Lower leg skin (tissue), 4 donors: ENCODE measurements at regions of chr1 and their contacts with region 1.

Region 1: DNA sequence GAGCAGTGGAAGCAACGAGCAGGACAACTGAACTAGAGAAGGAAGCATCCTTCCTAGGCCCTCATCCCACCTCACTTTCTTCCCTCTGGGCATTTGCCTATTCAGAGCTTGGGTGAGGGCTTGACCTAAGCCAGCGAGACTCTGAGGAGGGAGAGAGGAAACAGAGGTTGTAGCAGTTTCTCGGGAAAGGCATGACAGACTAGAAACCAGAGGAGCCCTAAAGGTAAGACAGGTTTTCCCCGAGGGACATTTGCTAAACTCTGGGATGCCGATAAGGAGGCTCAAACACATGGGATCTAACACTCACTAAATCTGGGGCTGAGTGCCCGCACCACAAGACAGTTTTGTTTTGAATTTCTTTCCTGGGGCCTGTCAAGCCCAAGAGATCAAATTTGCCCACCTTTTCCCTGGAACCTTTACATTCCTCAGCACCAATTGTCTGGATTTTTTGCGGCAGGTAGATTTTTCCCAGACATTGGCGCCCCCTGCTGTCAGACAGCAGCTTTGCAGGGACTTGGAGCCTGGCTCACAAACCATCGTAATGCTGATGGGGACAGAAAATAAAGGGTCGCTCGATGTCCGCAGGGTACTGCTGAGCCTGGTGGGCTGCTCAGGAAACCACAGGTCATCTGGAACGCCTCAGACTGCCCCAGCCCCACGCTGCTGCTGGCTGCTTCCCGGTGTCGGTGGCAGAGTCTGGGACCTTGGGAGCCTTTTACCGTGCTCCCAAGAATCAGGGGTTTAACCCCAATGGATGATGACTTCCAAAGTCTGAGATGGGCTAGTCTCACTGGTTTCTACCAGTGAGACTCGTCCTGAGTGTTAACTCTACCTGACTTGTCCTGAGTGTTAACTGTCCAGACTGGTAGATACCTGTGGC is 23.4 kb upstream of the TSPAN2 start:
- DNase-seq: no peak
- H3K4me3 ChIP-seq: no peak overlapping the region
- CTCF ChIP-seq: peak in 1 of 3 donors; percentile 63
- POLR2A ChIP-seq: no peak

Region 2: GRCh38 chr1:114979278-114979891 is 133.4 kb before region 1 on chr1:
- intact Hi-C with region 1: loop called (anchors 10 kb)
- DNase-seq: peak; percentile 66 to 87
- H3K4me3 ChIP-seq: no peak overlapping the region
- CTCF ChIP-seq: peak in 1 of 3 donors; percentile 31
- POLR2A ChIP-seq: no peak